ENCODE measurements at regions of chr12 and their contacts with region 1.

Region 1: GRCh38 chr12:24778486-24779304 is 170.2 kb downstream of the BCAT1 start:
- DNase-seq: no peak
- H3K4me3 Mint-ChIP-seq: no peak overlapping the region
- H3K27ac Mint-ChIP-seq: no peak overlapping the region
- H3K4me1 Mint-ChIP-seq: no peaks in the 10 kb centered on the region
- H3K27me3 Mint-ChIP-seq: peaks cover 11% of the 10 kb centered on the region

Region 2: GRCh38 chr12:23204933-23205778 is 1573.5 kb before region 1 on chr12:
- intact Hi-C with region 1: loop called (anchors 2 kb)
- DNase-seq: peak; percentile 65
- H3K4me3 Mint-ChIP-seq: no peak overlapping the region
- H3K27ac Mint-ChIP-seq: no peak overlapping the region
- H3K4me1 Mint-ChIP-seq: no peaks in the 10 kb centered on the region
- H3K27me3 Mint-ChIP-seq: no peaks in the 10 kb centered on the region

Region 3: GRCh38 chr12:24754690-24755638 is 23.7 kb before region 1 on chr12:
- intact Hi-C with region 1: no loop called
- DNase-seq: no peak
- H3K4me3 Mint-ChIP-seq: peak overlapping the region; percentile 15
- H3K27ac Mint-ChIP-seq: peak overlapping the region; percentile 85
- H3K4me1 Mint-ChIP-seq: peaks cover 19% of the 10 kb centered on the region
- H3K27me3 Mint-ChIP-seq: peaks cover 1% of the 10 kb centered on the region

Region 4: GRCh38 chr12:24810378-24810777 is 31.7 kb after region 1 on chr12:
- intact Hi-C with region 1: no loop called
- DNase-seq: no peak
- H3K4me3 Mint-ChIP-seq: no peak overlapping the region
- H3K27ac Mint-ChIP-seq: no peak overlapping the region
- H3K4me1 Mint-ChIP-seq: peaks cover 17% of the 10 kb centered on the region
- H3K27me3 Mint-ChIP-seq: no peaks in the 10 kb centered on the region

Region 5: GRCh38 chr12:24979329-24979728 is 200.6 kb after region 1 on chr12:
- intact Hi-C with region 1: no loop called
- DNase-seq: no peak
- H3K4me3 Mint-ChIP-seq: no peak overlapping the region
- H3K27ac Mint-ChIP-seq: no peak overlapping the region
- H3K4me1 Mint-ChIP-seq: peaks cover 2% of the 10 kb centered on the region
- H3K27me3 Mint-ChIP-seq: no peaks in the 10 kb centered on the region

Region 6: GRCh38 chr12:25135531-25136154 is 356.9 kb after region 1 on chr12:
- intact Hi-C with region 1: no loop called
- DNase-seq: peak; percentile 66
- H3K4me3 Mint-ChIP-seq: no peak overlapping the region
- H3K27ac Mint-ChIP-seq: no peak overlapping the region
- H3K4me1 Mint-ChIP-seq: no peaks in the 10 kb centered on the region
- H3K27me3 Mint-ChIP-seq: peaks cover 25% of the 10 kb centered on the region

Measured in activated CD4-positive, alpha-beta T cell treated with anti-CD3 and anti-CD28 coated beads, Interleukin-2, amount 10 ng/mL, durations not matched to agents 24 days and 14 days (primary cell).